ENCODE measurements at regions of chr12 and their contacts with region 1.

Region 1: DNA sequence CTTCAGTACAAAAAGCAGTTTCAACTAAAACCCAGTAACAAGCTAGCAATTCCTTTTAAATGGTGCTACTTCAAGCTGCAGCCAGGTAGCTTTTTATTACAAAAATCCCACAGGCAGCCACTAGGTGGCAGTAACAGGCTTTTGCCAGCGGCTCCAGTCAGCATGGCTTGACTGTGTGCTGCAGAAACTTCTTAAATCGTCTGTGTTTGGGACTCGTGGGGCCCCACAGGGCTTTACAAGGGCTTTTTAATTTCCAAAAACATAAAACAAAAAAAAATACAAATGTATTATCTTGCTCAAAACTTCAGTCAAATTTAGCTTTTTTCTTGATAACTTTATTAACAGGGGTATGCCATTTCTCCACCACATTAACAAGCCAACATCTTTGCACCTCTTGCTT is 3.6 kb upstream of the CLEC4E start:
- DNase-seq: peak in 4 of 5 donors; percentile 75 to 89 (median 83)
- H3K4me3 ChIP-seq: peak overlapping the region in 1 of 3 donors; percentile 11
- H3K27ac ChIP-seq: no peak overlapping the region
- H3K4me1 ChIP-seq: no peaks in the 10 kb centered on the region
- H3K27me3 ChIP-seq: no peaks in the 10 kb centered on the region
- CTCF ChIP-seq: peak; percentile 87

Region 2: DNA sequence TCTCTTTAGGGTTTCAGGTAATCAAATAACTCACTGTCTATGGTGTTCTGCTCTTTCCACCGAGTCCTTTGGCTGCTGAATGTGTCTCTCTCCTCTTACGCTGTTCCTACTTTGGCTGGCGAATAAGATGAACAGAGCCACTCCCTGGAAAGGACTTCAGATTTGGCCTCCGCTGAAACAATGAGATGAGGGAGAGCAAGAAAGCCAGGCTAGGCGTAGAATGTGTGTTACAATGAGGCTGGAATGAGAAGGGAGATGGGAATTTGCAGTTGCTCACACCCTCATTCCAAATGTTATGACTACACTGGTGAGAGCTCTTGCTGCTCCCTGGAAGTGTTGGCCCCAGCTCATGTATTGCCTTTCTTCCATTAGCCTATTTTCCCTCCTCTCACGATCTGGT is 118.3 kb after region 1 on chr12 and contains the start of gene MFAP5:
- intact Hi-C with region 1: no loop called
- DNase-seq: no peak
- H3K4me3 ChIP-seq: no peak within 1 kb of the TSS
- H3K27ac ChIP-seq: no peak within 1 kb of the TSS
- H3K4me1 ChIP-seq: no peaks in the 10 kb centered on the region
- H3K27me3 ChIP-seq: no peaks in the 10 kb centered on the region
- CTCF ChIP-seq: no peak
- total RNA-seq, gene MFAP5: 0.38 TPM

Region 3: DNA sequence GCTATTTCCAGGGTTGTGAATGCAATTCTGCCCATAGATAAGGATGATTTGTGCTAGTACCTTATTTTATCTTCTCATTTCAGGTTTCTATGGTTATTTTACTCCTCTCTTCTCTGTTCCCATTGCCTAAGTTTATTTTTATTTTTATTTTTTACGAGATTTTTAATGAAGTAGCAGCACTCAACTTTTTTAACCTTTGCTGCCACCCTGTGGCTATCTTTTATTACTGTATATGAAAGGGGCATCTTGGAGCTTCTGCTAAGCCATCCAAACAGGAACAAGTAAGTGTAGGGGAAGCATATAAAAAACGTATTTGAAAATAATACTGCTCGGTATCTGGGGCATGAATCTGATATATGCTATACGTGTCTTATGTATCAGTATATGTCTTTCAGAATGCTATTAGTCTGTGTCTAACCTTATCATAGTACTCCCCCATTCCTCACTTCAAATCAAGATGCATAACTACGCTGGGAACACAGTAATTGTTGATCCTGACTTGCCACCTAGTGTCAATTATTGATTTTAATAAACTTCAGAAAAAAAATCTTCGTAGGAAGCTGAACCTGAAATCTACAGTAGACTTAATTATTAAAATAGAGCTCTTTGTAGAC is 505.3 kb after region 1 on chr12:
- intact Hi-C with region 1: loop called (anchors 10 kb)
- DNase-seq: peak in 2 of 5 donors; percentile 60 to 73
- H3K4me3 ChIP-seq: no peak overlapping the region
- H3K27ac ChIP-seq: no peak overlapping the region
- H3K4me1 ChIP-seq: no peaks in the 10 kb centered on the region
- H3K27me3 ChIP-seq: no peaks in the 10 kb centered on the region
- CTCF ChIP-seq: peak; percentile 40